ENCODE measurements at regions of chr13 and their contacts with region 1.

Region 1: DNA sequence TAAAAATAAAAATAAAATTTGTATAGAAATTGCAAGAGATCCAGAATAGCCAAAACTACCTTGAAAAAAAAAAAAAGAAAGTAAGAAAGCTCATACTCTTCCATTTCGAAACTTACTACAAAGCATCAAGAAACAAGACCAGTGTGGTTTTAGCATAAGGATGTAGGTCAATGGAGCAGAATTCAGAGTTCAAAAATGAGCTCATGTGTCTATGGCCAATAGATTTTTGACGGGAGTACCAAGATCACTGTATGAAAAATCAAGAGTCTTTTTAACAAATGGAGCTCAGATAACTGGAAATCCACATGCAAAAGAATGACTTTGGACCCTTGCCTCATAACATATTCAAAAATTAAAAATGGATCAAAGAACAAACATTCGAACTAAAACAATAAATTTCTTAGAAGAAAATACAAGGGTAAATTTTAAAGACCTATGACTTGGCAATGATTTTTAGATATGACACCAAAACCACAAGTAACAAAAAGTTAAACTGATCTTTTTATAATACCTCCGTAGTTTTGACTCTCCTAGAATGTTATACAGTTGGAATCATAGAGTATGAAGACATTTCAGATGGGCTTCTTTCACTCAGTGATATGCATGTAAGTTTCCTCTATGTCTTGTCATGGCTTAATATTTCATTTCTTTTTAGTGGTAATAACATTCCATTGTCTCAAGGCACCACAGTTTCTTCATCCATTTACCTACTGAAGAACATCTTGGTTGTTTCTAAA is 43.2 kb downstream of the KLF12 start:
- DNase-seq: no peak
- ATAC-seq: no peak
- H3K4me3 ChIP-seq: no peak overlapping the region
- H3K4me3 Mint-ChIP-seq: peak overlapping the region; percentile 1 to 75 (median 44)
- H3K27ac ChIP-seq: no peak overlapping the region
- H3K27ac Mint-ChIP-seq: peak overlapping the region in 6 of 9 donors; percentile 3 to 90 (median 68)
- H3K4me1 ChIP-seq: peaks cover 36 to 43% of the 10 kb centered on the region in 2 donors
- H3K4me1 Mint-ChIP-seq: peaks cover 36 to 88% (median 77%) of the 10 kb centered on the region in 7 donors
- H3K27me3 ChIP-seq: no peaks in the 10 kb centered on the region
- H3K27me3 Mint-ChIP-seq: no peaks in the 10 kb centered on the region

Region 2: GRCh38 chr13:74077792-74078191 is 13.2 kb before region 1 on chr13:
- CTCF ChIA-PET with region 1: no interaction called
- POLR2A ChIA-PET with region 1: no interaction called
- intact Hi-C with region 1: loop called in 1 of 2 experiments (anchors 1 kb)
- DNase-seq: no peak
- ATAC-seq: no peak
- H3K4me3 ChIP-seq: no peak overlapping the region
- H3K4me3 Mint-ChIP-seq: no peak overlapping the region
- H3K27ac ChIP-seq: no peak overlapping the region
- H3K27ac Mint-ChIP-seq: peak overlapping the region in 1 of 9 donors; percentile 44
- H3K4me1 ChIP-seq: peaks cover 31 to 32% of the 10 kb centered on the region in 2 donors
- H3K4me1 Mint-ChIP-seq: peaks cover 34 to 91% (median 84%) of the 10 kb centered on the region in 7 donors
- H3K27me3 ChIP-seq: no peaks in the 10 kb centered on the region
- H3K27me3 Mint-ChIP-seq: no peaks in the 10 kb centered on the region

Region 3: GRCh38 chr13:74104661-74105275 is 13.7 kb after region 1 on chr13:
- CTCF ChIA-PET with region 1: no interaction called
- POLR2A ChIA-PET with region 1: interaction called, 5 read pairs
- intact Hi-C with region 1: loop called in 1 of 2 experiments (anchors 2 kb)
- DNase-seq: no peak
- ATAC-seq: no peak
- H3K4me3 ChIP-seq: no peak overlapping the region
- H3K4me3 Mint-ChIP-seq: no peak overlapping the region
- H3K27ac ChIP-seq: no peak overlapping the region
- H3K27ac Mint-ChIP-seq: peak overlapping the region in 1 of 9 donors; percentile 5
- H3K4me1 ChIP-seq: peaks cover 0 to 19% of the 10 kb centered on the region in 2 donors
- H3K4me1 Mint-ChIP-seq: peaks cover 8 to 95% (median 80%) of the 10 kb centered on the region in 7 donors
- H3K27me3 ChIP-seq: no peaks in the 10 kb centered on the region
- H3K27me3 Mint-ChIP-seq: no peaks in the 10 kb centered on the region

Measured in naive thymus-derived CD4-positive, alpha-beta T cell (primary cell).